Posterior vena cava (tissue), 2 donors: ENCODE measurements at regions of chrX and their contacts with region 1.

Region 1: GRCh38 chrX:65723706-65724105 is 56.3 kb downstream of the MSN start:
- DNase-seq: no peak

Region 2: GRCh38 chrX:65677954-65678469 is 45.7 kb before region 1 on chrX:
- intact Hi-C with region 1: loop called in 1 of 2 experiments (anchors 10 kb)
- DNase-seq: no peak